Activated B cell treated with CpG ODN at 0.5 μM for 24 hours (primary cell): ENCODE measurements at regions of chr1 and their contacts with region 1.

Region 1: DNA sequence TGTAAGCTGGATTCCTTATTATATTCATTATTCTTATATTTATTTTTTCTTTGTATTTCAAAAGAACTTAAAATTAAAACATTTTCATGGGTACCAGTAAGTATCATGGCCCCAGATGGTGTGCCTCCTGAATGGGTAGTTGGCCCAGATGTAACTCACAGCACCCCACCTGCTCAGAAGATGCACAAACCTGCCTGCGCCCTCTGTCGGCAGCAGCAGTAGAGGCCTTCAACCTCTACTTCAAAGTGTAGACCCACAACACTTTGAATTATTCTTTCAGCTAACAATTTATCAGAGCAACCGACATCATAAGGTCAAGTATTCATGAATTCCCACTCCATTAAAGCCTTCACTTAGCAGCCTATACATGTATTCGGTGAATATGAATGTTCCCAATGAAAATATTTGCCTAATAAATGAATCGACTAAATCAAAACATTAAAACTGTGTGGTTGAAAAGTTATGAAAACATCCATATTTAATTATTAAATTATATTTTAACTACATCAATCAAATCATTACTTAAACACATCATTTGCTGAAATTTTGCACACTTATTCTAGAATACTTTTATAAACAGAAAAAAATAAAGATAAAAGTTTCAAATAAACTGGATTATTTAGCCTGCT is 25.4 kb downstream of the PIGM start:
- DNase-seq: peak; percentile 56
- ATAC-seq: peak; percentile 83
- H3K4me3 Mint-ChIP-seq: no peak overlapping the region
- H3K27ac Mint-ChIP-seq: no peak overlapping the region
- H3K4me1 Mint-ChIP-seq: no peaks in the 10 kb centered on the region
- H3K27me3 Mint-ChIP-seq: peaks cover 10% of the 10 kb centered on the region
- CTCF ChIP-seq: peak; percentile 33

Region 2: GRCh38 chr1:159132271-159132881 is 874.0 kb before region 1 on chr1:
- CTCF ChIA-PET with region 1: interaction called, 6 read pairs
- POLR2A ChIA-PET with region 1: no interaction called
- intact Hi-C with region 1: loop called (anchors 1 kb)
- DNase-seq: peak; percentile 53
- ATAC-seq: peak; percentile 61
- H3K4me3 Mint-ChIP-seq: no peak overlapping the region
- H3K27ac Mint-ChIP-seq: no peak overlapping the region
- H3K4me1 Mint-ChIP-seq: peaks cover 2% of the 10 kb centered on the region
- H3K27me3 Mint-ChIP-seq: no peaks in the 10 kb centered on the region
- CTCF ChIP-seq: no peak

Region 3: DNA sequence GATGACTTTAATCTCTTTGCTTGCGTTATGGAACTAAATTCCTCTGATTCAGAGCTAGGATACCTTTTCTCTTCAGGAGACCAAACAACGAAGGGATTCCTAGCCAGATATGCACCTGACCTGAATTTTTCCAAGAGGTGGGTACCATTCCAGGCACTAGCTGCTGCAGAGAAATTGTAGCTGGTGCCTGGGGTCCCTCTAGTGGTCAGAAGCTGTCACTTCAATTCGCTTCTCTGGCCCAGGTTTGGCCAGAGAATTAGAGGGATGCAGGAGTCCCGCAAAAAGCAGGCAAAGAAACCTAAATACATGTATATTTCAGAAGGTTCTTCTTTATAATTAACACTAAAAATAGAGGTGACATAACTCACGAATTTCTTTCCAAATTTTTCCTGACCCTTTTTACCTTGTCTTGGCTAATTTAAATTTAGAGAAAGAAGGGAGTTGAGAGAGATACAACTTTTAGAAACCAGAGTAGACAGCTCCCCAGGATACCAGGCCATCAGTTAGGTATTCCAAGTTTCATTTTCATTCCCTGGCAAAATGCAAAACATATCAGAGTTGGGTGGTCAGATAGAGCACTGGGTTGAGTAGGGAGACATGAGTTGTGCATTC is 792.2 kb before region 1 on chr1:
- CTCF ChIA-PET with region 1: interaction called, 7 read pairs
- POLR2A ChIA-PET with region 1: no interaction called
- intact Hi-C with region 1: loop called (anchors 1 kb)
- DNase-seq: no peak
- ATAC-seq: peak; percentile 62
- H3K4me3 Mint-ChIP-seq: no peak overlapping the region
- H3K27ac Mint-ChIP-seq: no peak overlapping the region
- H3K4me1 Mint-ChIP-seq: peaks cover 2% of the 10 kb centered on the region
- H3K27me3 Mint-ChIP-seq: peaks cover 46% of the 10 kb centered on the region
- CTCF ChIP-seq: peak; percentile 82

Region 4: DNA sequence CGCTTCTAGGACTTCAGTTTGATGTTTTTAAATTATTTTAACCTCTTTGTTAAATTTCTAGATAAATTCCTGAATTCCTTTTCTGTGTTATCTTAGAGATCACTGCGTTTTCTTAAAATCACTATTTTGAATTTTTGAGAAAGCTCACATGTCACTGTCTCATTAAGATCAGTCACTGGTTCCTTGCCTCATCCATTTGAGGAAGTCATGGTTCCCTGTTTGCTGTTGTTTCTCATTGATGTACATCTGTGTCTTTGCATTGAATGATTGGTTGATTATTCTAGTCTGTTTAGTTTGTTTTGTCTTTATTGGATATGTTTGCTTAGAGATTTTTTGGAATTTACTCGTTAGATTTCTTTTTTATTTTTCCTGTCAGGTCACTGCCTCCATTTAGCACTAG is 342.2 kb before region 1 on chr1:
- CTCF ChIA-PET with region 1: no interaction called
- POLR2A ChIA-PET with region 1: no interaction called
- intact Hi-C with region 1: no loop called
- DNase-seq: no peak
- ATAC-seq: no peak
- H3K4me3 Mint-ChIP-seq: no peak overlapping the region
- H3K27ac Mint-ChIP-seq: no peak overlapping the region
- H3K4me1 Mint-ChIP-seq: no peaks in the 10 kb centered on the region
- H3K27me3 Mint-ChIP-seq: peaks cover 13% of the 10 kb centered on the region
- CTCF ChIP-seq: no peak

Region 5: DNA sequence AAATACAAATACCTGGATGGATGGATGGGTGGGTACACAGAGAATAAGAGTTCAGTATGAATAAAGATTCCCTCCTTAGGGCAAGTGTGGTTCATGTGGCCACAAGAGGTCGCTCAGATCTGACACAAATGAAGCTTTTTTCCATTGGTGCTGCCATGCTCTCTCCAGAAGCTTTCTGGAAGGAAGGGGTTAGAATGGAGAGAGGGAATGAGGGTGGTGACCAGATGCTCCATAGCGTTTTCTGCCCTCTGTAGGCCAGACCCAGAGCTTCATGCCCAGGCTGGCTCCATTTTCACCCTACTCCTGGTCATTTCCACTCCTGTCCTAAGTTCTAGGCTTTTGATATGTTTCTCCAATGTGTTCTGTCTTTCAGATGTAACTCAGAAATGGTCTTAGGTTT is 207.5 kb before region 1 on chr1:
- CTCF ChIA-PET with region 1: interaction called, 75 read pairs
- POLR2A ChIA-PET with region 1: no interaction called
- intact Hi-C with region 1: loop called (anchors 1 kb)
- DNase-seq: no peak
- ATAC-seq: no peak
- H3K4me3 Mint-ChIP-seq: no peak overlapping the region
- H3K27ac Mint-ChIP-seq: no peak overlapping the region
- H3K4me1 Mint-ChIP-seq: peaks cover 8% of the 10 kb centered on the region
- H3K27me3 Mint-ChIP-seq: peaks cover 28% of the 10 kb centered on the region
- CTCF ChIP-seq: no peak

Region 6: GRCh38 chr1:159891275-159892157 is 114.9 kb before region 1 on chr1:
- CTCF ChIA-PET with region 1: interaction called, 35 read pairs
- POLR2A ChIA-PET with region 1: no interaction called
- intact Hi-C with region 1: loop called (anchors 1 kb)
- DNase-seq: peak; percentile 54
- ATAC-seq: peak; percentile 75
- H3K4me3 Mint-ChIP-seq: no peak overlapping the region
- H3K27ac Mint-ChIP-seq: peak overlapping the region; percentile 43
- H3K4me1 Mint-ChIP-seq: peaks cover 24% of the 10 kb centered on the region
- H3K27me3 Mint-ChIP-seq: no peaks in the 10 kb centered on the region
- CTCF ChIP-seq: peak; percentile 75

Region 7: GRCh38 chr1:159936273-159936904 is 70.0 kb before region 1 on chr1:
- CTCF ChIA-PET with region 1: interaction called, 76 read pairs
- POLR2A ChIA-PET with region 1: no interaction called
- intact Hi-C with region 1: loop called (anchors 1 kb)
- DNase-seq: peak; percentile 86
- ATAC-seq: peak; percentile 89
- H3K4me3 Mint-ChIP-seq: peak overlapping the region; percentile 25
- H3K27ac Mint-ChIP-seq: no peak overlapping the region
- H3K4me1 Mint-ChIP-seq: peaks cover 47% of the 10 kb centered on the region
- H3K27me3 Mint-ChIP-seq: peaks cover 4% of the 10 kb centered on the region
- CTCF ChIP-seq: peak; percentile 91

Region 8: GRCh38 chr1:160031365-160032164 is 25.1 kb after region 1 on chr1 and contains the start of gene PIGM:
- CTCF ChIA-PET with region 1: interaction called, 22 read pairs
- POLR2A ChIA-PET with region 1: no interaction called
- intact Hi-C with region 1: no loop called
- DNase-seq: peak; percentile 81
- ATAC-seq: peak; percentile 98
- H3K4me3 Mint-ChIP-seq: peak within 1 kb of the TSS; percentile 97
- H3K27ac Mint-ChIP-seq: peak within 1 kb of the TSS; percentile 82
- H3K4me1 Mint-ChIP-seq: peaks cover 26% of the 10 kb centered on the region
- H3K27me3 Mint-ChIP-seq: no peaks in the 10 kb centered on the region
- CTCF ChIP-seq: no peak
- total RNA-seq, gene PIGM: 4.5 and 5.3 TPM in 2 replicates